Calu3 (cell line): ENCODE measurements at regions of chr3 and their contacts with region 1.

Region 1: DNA sequence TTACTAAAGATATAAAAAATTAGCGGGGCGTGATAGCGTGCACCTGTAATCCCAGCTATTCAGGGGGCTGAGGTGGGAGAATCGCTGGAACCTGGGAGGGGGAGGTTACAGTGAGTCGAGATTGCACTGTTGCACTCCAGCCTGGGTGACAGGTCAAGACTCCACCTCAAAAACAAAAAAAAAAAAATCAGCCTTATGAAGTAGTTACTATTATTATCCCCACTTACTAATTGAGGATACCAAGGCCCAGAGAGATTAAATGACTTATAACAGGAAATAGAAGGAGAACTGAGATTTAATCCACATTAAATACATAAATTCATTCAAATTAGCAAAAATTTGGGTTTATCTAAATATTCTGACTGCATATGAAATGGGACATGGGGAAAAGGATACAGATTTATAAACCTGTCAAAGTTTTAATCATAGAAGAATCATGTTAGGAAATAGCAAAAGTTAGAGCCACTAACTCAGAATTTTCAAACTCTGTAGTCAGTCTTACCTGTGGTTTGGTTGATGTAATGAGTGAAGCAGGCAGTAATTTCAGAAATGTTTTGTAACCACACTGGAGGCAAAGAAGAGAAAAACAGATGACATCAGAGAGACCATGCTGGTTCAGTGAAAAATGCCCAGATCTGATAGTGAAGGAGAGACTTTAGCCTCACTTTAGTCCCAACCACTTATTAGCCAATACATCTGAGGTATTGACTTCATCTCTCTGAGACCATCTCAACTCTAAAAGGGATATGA is 25.0 kb upstream of the ACAP2 start:
- DNase-seq: no peak
- H3K4me3 Mint-ChIP-seq: no peak overlapping the region
- H3K27ac Mint-ChIP-seq: no peak overlapping the region
- H3K4me1 Mint-ChIP-seq: no peaks in the 10 kb centered on the region
- H3K27me3 Mint-ChIP-seq: peaks cover 12% of the 10 kb centered on the region
- CTCF ChIP-seq: no peak

Region 2: GRCh38 chr3:194269610-194270145 is 1198.1 kb before region 1 on chr3:
- CTCF ChIA-PET with region 1: no interaction called
- intact Hi-C with region 1: no loop called
- DNase-seq: peak; percentile 83
- H3K4me3 Mint-ChIP-seq: peak overlapping the region; percentile 35
- H3K27ac Mint-ChIP-seq: peak overlapping the region; percentile 76
- H3K4me1 Mint-ChIP-seq: peaks cover 50% of the 10 kb centered on the region
- H3K27me3 Mint-ChIP-seq: no peaks in the 10 kb centered on the region
- CTCF ChIP-seq: peak; percentile 42

Region 3: GRCh38 chr3:194738254-194739093 is 729.3 kb before region 1 on chr3:
- CTCF ChIA-PET with region 1: no interaction called
- intact Hi-C with region 1: no loop called
- DNase-seq: peak; percentile 43
- H3K4me3 Mint-ChIP-seq: no peak overlapping the region
- H3K27ac Mint-ChIP-seq: no peak overlapping the region
- H3K4me1 Mint-ChIP-seq: peaks cover 28% of the 10 kb centered on the region
- H3K27me3 Mint-ChIP-seq: no peaks in the 10 kb centered on the region
- CTCF ChIP-seq: no peak

Region 4: DNA sequence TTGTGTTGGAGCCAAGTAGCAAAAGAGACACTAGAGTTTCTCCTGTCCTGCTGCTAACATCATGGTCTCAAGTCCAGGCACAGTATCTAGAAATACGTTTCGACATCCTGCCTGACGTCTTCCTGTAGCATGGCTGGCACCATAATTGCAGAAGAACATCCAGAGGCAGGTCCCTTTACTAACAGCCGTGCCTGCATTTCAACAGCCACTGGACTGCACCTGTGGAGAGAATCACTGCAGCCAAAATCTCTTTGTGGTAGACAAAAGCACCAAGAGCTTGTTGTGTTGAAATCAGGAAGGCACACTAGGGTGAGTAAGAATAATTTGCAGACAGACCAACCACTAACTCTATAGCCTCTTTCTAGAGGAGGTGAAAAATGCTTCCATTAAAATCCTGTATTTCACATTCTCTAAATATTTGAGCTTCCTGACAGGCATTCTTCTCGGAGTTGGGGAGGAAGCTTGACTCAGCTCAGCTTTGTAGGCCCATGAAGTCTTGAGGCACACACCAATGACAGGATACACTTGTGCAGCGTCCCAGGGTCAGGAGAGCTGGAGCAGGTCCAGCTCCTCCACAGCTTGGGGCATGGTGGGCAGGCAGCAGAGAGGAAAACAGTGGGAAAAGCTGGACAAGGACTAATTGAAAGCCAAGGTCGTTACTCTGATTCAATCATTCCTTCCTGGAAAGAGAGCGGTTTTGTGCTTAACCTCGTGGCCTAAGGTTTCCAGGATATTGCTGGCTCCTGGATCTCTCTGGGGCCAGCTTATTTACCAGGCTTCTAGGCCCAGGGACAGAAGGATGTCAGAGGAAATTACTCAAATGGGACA is 537.2 kb before region 1 on chr3:
- CTCF ChIA-PET with region 1: no interaction called
- intact Hi-C with region 1: no loop called
- DNase-seq: no peak
- H3K4me3 Mint-ChIP-seq: no peak overlapping the region
- H3K27ac Mint-ChIP-seq: no peak overlapping the region
- H3K4me1 Mint-ChIP-seq: peaks cover 17% of the 10 kb centered on the region
- H3K27me3 Mint-ChIP-seq: peaks cover 41% of the 10 kb centered on the region
- CTCF ChIP-seq: no peak

Region 5: GRCh38 chr3:195512798-195513345 is 45.1 kb after region 1 on chr3:
- CTCF ChIA-PET with region 1: no interaction called
- intact Hi-C with region 1: loop called (anchors 5 kb)
- DNase-seq: no peak
- H3K4me3 Mint-ChIP-seq: no peak overlapping the region
- H3K27ac Mint-ChIP-seq: no peak overlapping the region
- H3K4me1 Mint-ChIP-seq: no peaks in the 10 kb centered on the region
- H3K27me3 Mint-ChIP-seq: no peaks in the 10 kb centered on the region
- CTCF ChIP-seq: no peak

Region 6: GRCh38 chr3:197372047-197372666 is 1904.3 kb after region 1 on chr3:
- CTCF ChIA-PET with region 1: no interaction called
- intact Hi-C with region 1: no loop called
- DNase-seq: peak; percentile 62
- H3K4me3 Mint-ChIP-seq: no peak overlapping the region
- H3K27ac Mint-ChIP-seq: no peak overlapping the region
- H3K4me1 Mint-ChIP-seq: peaks cover 27% of the 10 kb centered on the region
- H3K27me3 Mint-ChIP-seq: no peaks in the 10 kb centered on the region
- CTCF ChIP-seq: no peak